Gastrocnemius medialis (tissue), 4 donors: ENCODE measurements at regions of chr10 and their contacts with region 1.

Region 1: GRCh38 chr10:112471878-112472487 is 25.0 kb downstream of the VTI1A start:
- DNase-seq: no peak
- ATAC-seq: peak in 1 of 2 donors; percentile 56
- H3K4me3 ChIP-seq: no peak overlapping the region
- H3K27ac ChIP-seq: no peak overlapping the region
- H3K4me1 ChIP-seq: no peaks in the 10 kb centered on the region
- H3K27me3 ChIP-seq: no peaks in the 10 kb centered on the region
- CTCF ChIP-seq: peak; percentile 30 to 70 (median 51)
- POLR2A ChIP-seq: no peak

Region 2: DNA sequence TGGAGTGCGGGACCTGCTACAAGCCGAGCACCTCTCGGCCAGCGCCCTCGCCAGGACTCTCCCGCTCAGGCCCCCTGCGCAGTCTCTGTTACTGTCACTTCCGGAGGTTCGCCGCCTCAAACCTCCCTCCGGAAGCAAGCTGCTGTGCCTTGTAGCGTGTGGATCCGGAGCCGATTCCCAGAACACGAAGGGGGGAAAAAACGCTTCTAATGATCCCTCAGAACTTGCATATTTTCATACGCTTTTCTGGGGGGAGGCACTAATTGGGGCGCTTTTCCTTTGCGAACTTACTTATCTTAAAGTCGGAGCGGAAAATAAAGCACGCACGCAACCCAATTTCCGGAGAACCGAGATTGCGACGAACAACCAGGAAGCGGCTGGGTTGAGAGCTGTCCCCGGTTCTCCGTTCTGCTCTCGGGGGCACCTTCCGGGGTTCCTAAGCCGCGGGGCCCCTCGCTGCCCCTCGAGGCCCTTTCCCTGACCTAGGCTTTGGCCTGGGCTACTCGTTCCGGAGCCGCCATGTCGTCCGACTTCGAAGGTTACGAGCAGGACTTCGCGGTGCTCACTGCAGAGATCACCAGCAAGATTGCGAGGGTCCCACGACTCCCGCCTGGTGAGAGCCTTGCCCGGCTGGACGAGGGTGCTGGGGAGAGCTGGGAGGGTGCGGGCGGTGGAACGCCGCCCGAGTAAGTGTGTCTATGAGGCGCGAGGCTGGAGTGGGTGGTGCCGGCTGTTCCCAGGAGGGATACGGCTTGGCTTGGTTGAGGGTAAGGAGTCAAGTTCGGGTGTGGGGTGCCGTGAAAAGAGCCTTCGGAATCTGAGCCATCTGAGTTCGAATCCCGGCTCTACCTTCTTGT is 24.9 kb before region 1 on chr10 and contains the starts of genes VTI1A and ZDHHC6:
- in situ Hi-C with region 1: no loop called
- intact Hi-C with region 1: loop called (anchors 1 kb)
- DNase-seq: peak; percentile 71 to 83
- ATAC-seq: peak; percentile 96 to 98
- H3K4me3 ChIP-seq: peak within 1 kb of the TSS; percentile 65 to 100 (median 92)
- H3K27ac ChIP-seq: peak within 1 kb of the TSS; percentile 88 to 95 (median 92)
- H3K4me1 ChIP-seq: peaks cover 18 to 19% of the 10 kb centered on the region in 2 donors
- H3K27me3 ChIP-seq: no peaks in the 10 kb centered on the region
- CTCF ChIP-seq: peak in 2 of 5 experiments; percentile 17 to 26
- POLR2A ChIP-seq: peak in 1 of 2 donors; percentile 58
- total RNA-seq, gene VTI1A: 26.5 to 51.2 (median 30.6) TPM
- total RNA-seq, gene ZDHHC6: 7.4 to 11.7 (median 9.7) TPM